PC-9 (cell line): ENCODE measurements at regions of chr6 and their contacts with region 1.

Region 1: GRCh38 chr6:83221889-83222479 is 28.8 kb downstream of the RWDD2A start:
- DNase-seq: no peak
- H3K4me3 ChIP-seq: no peak overlapping the region
- H3K27ac ChIP-seq: no peak overlapping the region
- H3K4me1 ChIP-seq: no peaks in the 10 kb centered on the region
- H3K27me3 ChIP-seq: no peaks in the 10 kb centered on the region
- CTCF ChIP-seq: peak; percentile 61

Region 2: GRCh38 chr6:83389606-83390005 is 167.6 kb after region 1 on chr6:
- CTCF ChIA-PET with region 1: no interaction called
- POLR2A ChIA-PET with region 1: no interaction called
- intact Hi-C with region 1: loop called (anchors 10 kb)
- DNase-seq: no peak
- H3K4me3 ChIP-seq: no peak overlapping the region
- H3K27ac ChIP-seq: no peak overlapping the region
- H3K4me1 ChIP-seq: no peaks in the 10 kb centered on the region
- H3K27me3 ChIP-seq: no peaks in the 10 kb centered on the region
- CTCF ChIP-seq: no peak